ENCODE measurements at regions of chr1 and their contacts with region 1.

Region 1: GRCh38 chr1:7975212-7975865 is 13.8 kb downstream of the PARK7 start:
- DNase-seq: peak; percentile 82 to 91
- H3K4me3 ChIP-seq: no peak overlapping the region
- H3K4me3 Mint-ChIP-seq: no peak overlapping the region
- H3K27ac Mint-ChIP-seq: peak overlapping the region; percentile 38
- H3K4me1 ChIP-seq: no peaks in the 10 kb centered on the region
- H3K4me1 Mint-ChIP-seq: peaks cover 7% of the 10 kb centered on the region
- H3K27me3 ChIP-seq: no peaks in the 10 kb centered on the region
- H3K27me3 Mint-ChIP-seq: no peaks in the 10 kb centered on the region
- CTCF ChIP-seq: peak; percentile 86 to 97

Region 2: GRCh38 chr1:8015036-8015808 is 39.9 kb after region 1 on chr1:
- CTCF ChIA-PET with region 1: interaction called, 9 read pairs
- POLR2A ChIA-PET with region 1: no interaction called
- intact Hi-C with region 1: loop called (anchors 2 kb)
- DNase-seq: peak in 1 of 2 experiments; percentile 65
- H3K4me3 ChIP-seq: no peak overlapping the region
- H3K4me3 Mint-ChIP-seq: no peak overlapping the region
- H3K27ac Mint-ChIP-seq: no peak overlapping the region
- H3K4me1 ChIP-seq: peaks cover 55% of the 10 kb centered on the region
- H3K4me1 Mint-ChIP-seq: peaks cover 46% of the 10 kb centered on the region
- H3K27me3 ChIP-seq: no peaks in the 10 kb centered on the region
- H3K27me3 Mint-ChIP-seq: no peaks in the 10 kb centered on the region
- CTCF ChIP-seq: peak; percentile 44 to 52

Region 3: GRCh38 chr1:8035289-8035688 is 60.0 kb after region 1 on chr1:
- CTCF ChIA-PET with region 1: no interaction called
- POLR2A ChIA-PET with region 1: no interaction called
- intact Hi-C with region 1: no loop called
- DNase-seq: no peak
- H3K4me3 ChIP-seq: no peak overlapping the region
- H3K4me3 Mint-ChIP-seq: no peak overlapping the region
- H3K27ac Mint-ChIP-seq: no peak overlapping the region
- H3K4me1 ChIP-seq: no peaks in the 10 kb centered on the region
- H3K4me1 Mint-ChIP-seq: peaks cover 13% of the 10 kb centered on the region
- H3K27me3 ChIP-seq: no peaks in the 10 kb centered on the region
- H3K27me3 Mint-ChIP-seq: no peaks in the 10 kb centered on the region
- CTCF ChIP-seq: no peak

Measured in Caco-2 (cell line).